ENCODE measurements at regions of chr5 and their contacts with region 1.

Region 1: GRCh38 chr5:172958331-172959046 is 735 bp upstream of the RPL26L1 start:
- DNase-seq: peak; percentile 80
- H3K4me3 Mint-ChIP-seq: peak overlapping the region; percentile 94
- H3K27ac Mint-ChIP-seq: peak overlapping the region; percentile 98
- H3K4me1 Mint-ChIP-seq: peaks cover 49% of the 10 kb centered on the region
- H3K27me3 Mint-ChIP-seq: no peaks in the 10 kb centered on the region
- CTCF ChIP-seq: no peak

Region 2: GRCh38 chr5:172805796-172806495 is 152.5 kb before region 1 on chr5:
- CTCF ChIA-PET with region 1: no interaction called
- POLR2A ChIA-PET with region 1: no interaction called
- intact Hi-C with region 1: no loop called
- DNase-seq: no peak
- H3K4me3 Mint-ChIP-seq: no peak overlapping the region
- H3K27ac Mint-ChIP-seq: peak overlapping the region; percentile 90
- H3K4me1 Mint-ChIP-seq: peaks cover 35% of the 10 kb centered on the region
- H3K27me3 Mint-ChIP-seq: no peaks in the 10 kb centered on the region
- CTCF ChIP-seq: no peak

Region 3: DNA sequence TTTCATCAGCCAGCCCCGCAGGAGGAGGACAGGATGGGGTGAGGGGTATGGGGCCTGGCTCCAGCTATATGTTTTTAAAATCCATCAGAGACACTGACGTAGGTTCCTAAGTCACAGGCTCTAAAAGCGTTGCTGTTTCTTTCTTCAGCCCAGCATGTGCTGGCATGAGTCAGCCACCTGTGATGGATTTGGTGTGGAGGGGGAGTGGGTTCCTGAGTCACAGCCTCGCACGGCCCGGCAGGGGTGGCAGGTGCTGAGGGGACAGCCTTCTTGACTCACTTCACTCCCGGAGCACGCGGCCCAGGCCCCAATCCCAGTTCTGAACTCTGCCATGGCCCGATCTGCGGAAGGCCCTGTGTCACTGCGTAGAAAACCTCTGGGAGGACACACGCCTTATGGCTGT is 38.0 kb before region 1 on chr5:
- CTCF ChIA-PET with region 1: interaction called, 3 read pairs
- POLR2A ChIA-PET with region 1: no interaction called
- intact Hi-C with region 1: loop called (anchors 2 kb)
- DNase-seq: peak; percentile 95
- H3K4me3 Mint-ChIP-seq: no peak overlapping the region
- H3K27ac Mint-ChIP-seq: peak overlapping the region; percentile 89
- H3K4me1 Mint-ChIP-seq: peaks cover 26% of the 10 kb centered on the region
- H3K27me3 Mint-ChIP-seq: no peaks in the 10 kb centered on the region
- CTCF ChIP-seq: no peak

Region 4: DNA sequence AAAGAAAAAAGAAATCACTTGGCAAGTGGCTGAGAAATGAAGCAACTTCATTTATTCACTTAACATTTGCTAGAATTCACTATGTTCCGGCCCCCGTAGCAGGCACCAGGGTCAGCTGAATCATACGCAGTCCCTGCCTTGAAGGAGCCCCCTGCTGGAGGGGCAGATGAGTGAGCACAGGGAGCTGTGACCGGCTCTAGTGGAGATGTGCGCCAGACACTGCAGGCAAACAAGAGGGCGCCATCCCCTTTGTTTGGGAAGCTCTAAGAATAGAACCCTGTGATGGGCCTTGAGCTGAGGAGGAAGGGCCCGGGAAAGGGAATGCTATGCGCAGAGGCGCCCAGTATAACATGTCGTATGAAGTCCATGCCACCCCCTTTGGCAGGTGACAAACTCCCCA is 19.4 kb before region 1 on chr5:
- CTCF ChIA-PET with region 1: interaction called, 16 read pairs
- POLR2A ChIA-PET with region 1: interaction called, 6 read pairs
- intact Hi-C with region 1: no loop called
- DNase-seq: peak; percentile 40
- H3K4me3 Mint-ChIP-seq: no peak overlapping the region
- H3K27ac Mint-ChIP-seq: no peak overlapping the region
- H3K4me1 Mint-ChIP-seq: no peaks in the 10 kb centered on the region
- H3K27me3 Mint-ChIP-seq: no peaks in the 10 kb centered on the region
- CTCF ChIP-seq: peak; percentile 52

Region 5: DNA sequence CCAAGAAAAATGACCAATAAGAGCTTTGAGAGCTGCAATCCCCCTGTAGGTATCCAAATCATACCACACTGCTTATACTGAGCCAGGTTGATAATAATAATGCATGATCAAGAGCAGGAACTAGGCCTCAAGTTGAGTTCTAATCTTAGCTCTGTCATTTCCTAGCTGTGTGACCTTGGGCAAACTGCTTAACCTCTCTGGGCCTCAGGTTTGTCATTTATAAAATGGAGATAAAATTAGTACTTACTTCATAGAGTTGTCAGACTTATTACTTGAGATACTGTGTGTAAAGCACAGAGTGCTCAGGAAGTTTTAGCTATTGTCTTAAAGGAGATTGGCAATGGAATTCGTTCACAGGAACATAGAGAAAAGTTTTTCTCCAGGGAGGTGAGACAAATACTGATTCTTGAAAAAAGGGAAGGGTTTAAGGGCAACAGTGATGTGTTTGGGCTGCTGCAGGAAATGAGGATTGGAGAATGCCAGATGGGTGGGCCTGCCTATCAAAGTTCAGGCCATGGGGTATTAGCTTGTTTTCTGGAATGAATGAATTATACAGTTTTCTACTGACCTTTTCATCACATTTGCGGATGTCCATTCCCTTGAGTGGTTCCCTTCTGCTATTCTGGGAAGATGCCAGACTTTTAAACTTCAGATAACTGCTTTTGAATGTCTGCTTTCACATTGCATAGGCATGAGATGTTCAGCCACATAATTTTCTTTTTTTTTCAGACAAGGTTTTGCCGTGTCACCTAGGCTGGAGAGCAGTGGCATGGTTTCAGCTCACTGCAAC is 14.8 kb after region 1 on chr5:
- CTCF ChIA-PET with region 1: interaction called, 21 read pairs
- POLR2A ChIA-PET with region 1: interaction called, 9 read pairs
- intact Hi-C with region 1: no loop called
- DNase-seq: no peak
- H3K4me3 Mint-ChIP-seq: no peak overlapping the region
- H3K27ac Mint-ChIP-seq: no peak overlapping the region
- H3K4me1 Mint-ChIP-seq: no peaks in the 10 kb centered on the region
- H3K27me3 Mint-ChIP-seq: no peaks in the 10 kb centered on the region
- CTCF ChIP-seq: no peak

Region 6: DNA sequence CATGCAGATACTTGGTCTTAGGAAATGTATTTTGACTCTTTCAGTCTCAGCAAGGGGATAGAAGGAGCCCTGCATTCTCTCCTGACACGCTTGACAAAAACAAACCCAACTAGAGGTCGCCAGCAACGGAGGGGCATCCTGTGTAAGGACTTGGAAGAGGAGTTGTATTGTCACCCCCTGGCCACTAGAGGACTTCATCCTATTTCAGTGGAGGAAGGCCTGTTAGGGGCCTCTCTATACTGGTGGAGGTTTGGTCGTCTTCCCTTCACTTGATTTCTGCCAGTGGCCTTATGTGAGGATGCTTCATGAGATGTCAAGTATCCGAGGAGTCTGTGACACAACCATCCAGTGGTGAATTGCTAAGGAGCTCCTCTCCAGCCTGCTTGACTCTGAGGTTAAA is 492.5 kb after region 1 on chr5:
- CTCF ChIA-PET with region 1: no interaction called
- POLR2A ChIA-PET with region 1: no interaction called
- intact Hi-C with region 1: loop called (anchors 10 kb)
- DNase-seq: peak; percentile 34
- H3K4me3 Mint-ChIP-seq: no peak overlapping the region
- H3K27ac Mint-ChIP-seq: no peak overlapping the region
- H3K4me1 Mint-ChIP-seq: peaks cover 46% of the 10 kb centered on the region
- H3K27me3 Mint-ChIP-seq: no peaks in the 10 kb centered on the region
- CTCF ChIP-seq: peak; percentile 36